ENCODE measurements at regions of chr10 and their contacts with region 1.

Region 1: DNA sequence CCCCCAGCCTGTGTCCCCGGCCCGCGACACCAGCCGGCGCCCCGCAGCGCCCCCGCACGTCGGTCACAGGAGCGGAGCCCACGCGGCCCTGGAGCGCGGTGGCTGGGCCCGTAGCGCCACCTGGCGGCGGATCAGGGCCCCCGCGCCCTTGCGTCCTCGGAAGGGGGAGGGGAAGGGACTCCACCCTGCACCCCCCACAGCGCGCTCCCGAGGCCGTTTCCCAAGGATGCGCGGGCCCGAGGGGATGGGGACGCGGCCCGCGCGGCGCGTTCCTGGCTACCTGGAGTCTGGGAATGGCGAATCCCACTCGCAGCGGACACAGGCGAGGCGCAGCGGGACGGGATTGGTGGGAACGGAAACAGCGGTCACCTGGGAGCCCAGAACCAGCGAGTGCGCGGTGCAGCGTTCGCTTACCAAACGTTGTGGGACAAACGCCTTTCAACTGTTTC is 23.8 kb upstream of the MKI67 start:
- DNase-seq: peak; percentile 71 to 89 (median 83)
- ATAC-seq: peak; percentile 99
- H3K4me3 ChIP-seq: peak overlapping the region; percentile 79
- H3K4me3 Mint-ChIP-seq: peak overlapping the region; percentile 32 to 77 (median 60)
- H3K27ac ChIP-seq: no peak overlapping the region
- H3K27ac Mint-ChIP-seq: peak overlapping the region in 1 of 9 donors; percentile 14
- H3K4me1 ChIP-seq: no peaks in the 10 kb centered on the region
- H3K4me1 Mint-ChIP-seq: peaks cover 0 to 16% (median 3%) of the 10 kb centered on the region in 7 donors
- H3K27me3 ChIP-seq: no peaks in the 10 kb centered on the region
- H3K27me3 Mint-ChIP-seq: peaks cover 0 to 26% (median 0%) of the 10 kb centered on the region in 5 donors

Region 2: GRCh38 chr10:127081851-127082345 is 1068.2 kb before region 1 on chr10:
- CTCF ChIA-PET with region 1: no interaction called
- POLR2A ChIA-PET with region 1: no interaction called
- intact Hi-C with region 1: no loop called
- DNase-seq: no peak
- ATAC-seq: no peak
- H3K4me3 ChIP-seq: no peak overlapping the region
- H3K4me3 Mint-ChIP-seq: no peak overlapping the region
- H3K27ac ChIP-seq: no peak overlapping the region
- H3K27ac Mint-ChIP-seq: no peak overlapping the region
- H3K4me1 ChIP-seq: no peaks in the 10 kb centered on the region
- H3K4me1 Mint-ChIP-seq: no peaks in the 10 kb centered on the region
- H3K27me3 ChIP-seq: no peaks in the 10 kb centered on the region
- H3K27me3 Mint-ChIP-seq: peaks cover 0 to 12% (median 0%) of the 10 kb centered on the region in 5 donors

Region 3: DNA sequence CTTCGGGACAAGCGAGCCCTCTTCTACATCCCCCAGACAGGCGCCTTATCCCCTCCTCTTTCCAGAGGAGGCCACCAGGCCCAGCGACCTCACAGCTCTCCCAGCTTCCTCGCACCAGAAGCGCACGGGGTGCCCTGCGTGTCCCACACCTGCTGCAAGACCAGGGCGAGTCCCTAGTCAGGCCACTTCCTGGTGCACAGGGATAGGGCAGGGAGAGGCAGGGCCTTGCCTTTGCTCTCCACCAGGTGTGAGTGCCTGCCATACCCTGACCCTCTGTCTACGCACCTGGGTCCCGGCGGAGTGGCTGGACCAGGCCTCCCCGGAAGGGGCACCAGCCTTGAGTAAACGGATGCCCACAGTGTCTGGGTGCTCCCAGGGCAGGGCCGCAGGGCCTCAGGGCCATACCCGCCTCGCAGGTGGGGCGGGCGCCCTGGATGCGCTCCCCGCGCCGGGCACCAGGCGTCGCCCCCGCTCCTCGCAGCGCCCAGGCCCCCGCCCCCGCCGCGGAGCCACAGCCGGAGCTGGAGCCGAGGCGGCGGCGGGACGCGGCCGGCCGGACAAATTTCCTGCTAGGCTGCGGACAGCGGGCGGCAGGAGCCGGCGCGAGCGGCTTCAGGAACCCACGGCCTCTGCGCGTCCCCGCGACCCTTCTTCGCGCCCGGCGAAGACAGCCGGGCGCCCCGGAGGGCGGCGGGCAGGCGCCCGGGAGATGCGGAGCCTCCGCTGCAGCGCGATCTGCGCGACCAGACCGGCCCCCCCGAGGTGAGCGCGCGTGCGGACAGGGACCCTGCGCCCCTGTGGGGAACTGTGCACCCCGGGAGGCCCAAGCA is 243.3 kb before region 1 on chr10 and contains the start of gene PTPRE:
- CTCF ChIA-PET with region 1: interaction called, 3 read pairs
- POLR2A ChIA-PET with region 1: no interaction called
- intact Hi-C with region 1: loop called (anchors 1 to 2 kb)
- DNase-seq: peak; percentile 18 to 82 (median 65)
- ATAC-seq: peak; percentile 95
- H3K4me3 ChIP-seq: peak within 1 kb of the TSS; percentile 39
- H3K4me3 Mint-ChIP-seq: peak within 1 kb of the TSS; percentile 8 to 61 (median 38)
- H3K27ac ChIP-seq: no peak within 1 kb of the TSS
- H3K27ac Mint-ChIP-seq: no peak within 1 kb of the TSS
- H3K4me1 ChIP-seq: no peaks in the 10 kb centered on the region
- H3K4me1 Mint-ChIP-seq: peaks cover 0 to 8% (median 0%) of the 10 kb centered on the region in 7 donors
- H3K27me3 ChIP-seq: no peaks in the 10 kb centered on the region
- H3K27me3 Mint-ChIP-seq: peaks cover 20 to 44% (median 24%) of the 10 kb centered on the region in 5 donors
- total RNA-seq, gene PTPRE: 25.4 to 237 (median 29.1) TPM

Region 4: GRCh38 chr10:128035557-128035973 is 114.5 kb before region 1 on chr10:
- CTCF ChIA-PET with region 1: interaction called, 4 read pairs
- POLR2A ChIA-PET with region 1: no interaction called
- intact Hi-C with region 1: loop called (anchors 1 kb)
- DNase-seq: peak in 8 of 9 donors; percentile 33 to 69 (median 50)
- ATAC-seq: peak; percentile 94
- H3K4me3 ChIP-seq: no peak overlapping the region
- H3K4me3 Mint-ChIP-seq: no peak overlapping the region
- H3K27ac ChIP-seq: no peak overlapping the region
- H3K27ac Mint-ChIP-seq: no peak overlapping the region
- H3K4me1 ChIP-seq: no peaks in the 10 kb centered on the region
- H3K4me1 Mint-ChIP-seq: peaks cover 0 to 10% (median 0%) of the 10 kb centered on the region in 7 donors
- H3K27me3 ChIP-seq: no peaks in the 10 kb centered on the region
- H3K27me3 Mint-ChIP-seq: peaks cover 0 to 9% (median 0%) of the 10 kb centered on the region in 5 donors

Region 5: DNA sequence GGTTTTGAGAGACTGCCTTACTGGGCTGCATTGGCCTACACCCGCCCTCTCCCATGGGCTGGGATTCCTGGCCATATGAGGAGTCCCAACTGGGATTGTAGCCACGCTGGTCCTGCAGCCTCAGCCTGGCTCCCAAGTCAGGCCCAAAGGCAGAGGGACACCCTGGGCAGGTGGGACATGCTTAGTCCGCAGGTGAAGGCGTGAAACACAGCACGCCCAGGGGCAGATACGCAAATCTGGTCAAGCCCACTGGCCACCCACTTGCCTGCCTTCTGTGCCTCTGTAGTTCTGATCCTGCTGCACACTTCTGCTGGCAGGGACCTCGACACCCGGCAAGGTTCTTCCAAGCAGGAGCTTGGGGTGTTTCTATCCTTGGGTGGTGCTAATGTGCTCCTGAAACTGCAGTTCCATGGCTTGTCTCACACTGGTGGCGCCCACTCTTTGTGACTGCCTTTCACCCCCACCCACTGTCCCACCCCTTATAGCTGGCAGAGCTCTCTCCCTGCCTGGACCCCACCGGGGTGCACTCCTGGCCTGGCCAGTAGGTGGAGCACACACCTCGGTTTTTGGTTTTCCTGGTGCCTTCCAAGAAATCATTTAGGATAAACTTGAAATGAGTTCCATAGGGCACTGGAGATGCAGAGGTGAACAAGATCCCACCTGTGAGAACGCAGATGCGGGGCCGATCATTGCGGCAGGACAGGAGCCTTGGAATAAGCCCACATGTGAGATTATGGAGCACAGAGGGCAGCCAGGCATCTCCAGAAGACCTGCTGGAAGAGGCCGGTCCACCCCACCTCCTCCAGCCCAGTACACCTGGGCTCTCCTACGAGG is 71.7 kb before region 1 on chr10:
- CTCF ChIA-PET with region 1: interaction called, 7 read pairs
- POLR2A ChIA-PET with region 1: no interaction called
- intact Hi-C with region 1: loop called (anchors 1 kb)
- DNase-seq: peak in 5 of 9 donors; percentile 13 to 48 (median 33)
- ATAC-seq: peak; percentile 70
- H3K4me3 ChIP-seq: no peak overlapping the region
- H3K4me3 Mint-ChIP-seq: no peak overlapping the region
- H3K27ac ChIP-seq: no peak overlapping the region
- H3K27ac Mint-ChIP-seq: no peak overlapping the region
- H3K4me1 ChIP-seq: no peaks in the 10 kb centered on the region
- H3K4me1 Mint-ChIP-seq: peaks cover 0 to 8% (median 0%) of the 10 kb centered on the region in 7 donors
- H3K27me3 ChIP-seq: no peaks in the 10 kb centered on the region
- H3K27me3 Mint-ChIP-seq: no peaks in the 10 kb centered on the region

Region 6: DNA sequence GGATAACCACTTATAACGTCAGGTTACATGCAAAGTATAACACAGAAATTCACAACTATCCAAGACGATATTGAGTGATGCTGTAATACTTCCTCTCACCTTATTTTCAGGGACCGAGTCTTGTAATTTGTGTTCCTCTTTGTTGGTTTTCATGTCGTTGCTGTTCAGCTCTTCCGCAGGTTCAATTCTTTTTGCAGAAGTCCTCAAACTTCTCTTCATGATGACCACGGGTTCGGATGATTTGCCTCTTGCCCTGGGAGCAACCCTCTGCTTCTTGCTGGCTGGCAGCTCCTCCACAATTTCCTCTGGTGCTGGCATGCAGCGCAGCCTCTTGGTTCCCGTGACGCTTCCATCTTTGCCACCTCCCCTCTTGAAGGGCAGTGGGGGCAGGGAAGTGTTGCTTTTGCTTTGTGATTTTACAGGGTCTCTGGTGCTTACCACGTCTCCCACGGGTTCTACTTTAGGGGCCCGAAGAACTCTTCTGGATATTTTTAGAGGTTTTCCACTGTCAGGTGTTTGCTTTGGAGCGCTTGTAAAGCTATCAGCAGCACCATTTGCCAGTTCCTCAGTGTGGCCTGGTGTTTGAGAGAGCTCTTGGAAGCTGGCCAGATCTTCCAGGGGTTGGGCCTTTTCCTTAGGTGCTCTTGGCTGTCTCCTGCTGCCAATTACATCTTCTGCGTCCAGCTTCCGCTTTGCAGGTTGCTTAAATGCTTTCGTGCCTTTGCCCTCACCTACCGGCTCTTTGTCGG is 47.4 kb before region 1 on chr10:
- CTCF ChIA-PET with region 1: no interaction called
- POLR2A ChIA-PET with region 1: no interaction called
- intact Hi-C with region 1: loop called in 1 of 2 experiments (anchors 1 kb)
- DNase-seq: no peak
- ATAC-seq: no peak
- H3K4me3 ChIP-seq: peak overlapping the region; percentile 16
- H3K4me3 Mint-ChIP-seq: peak overlapping the region in 8 of 10 donors; percentile 16 to 68 (median 40)
- H3K27ac ChIP-seq: no peak overlapping the region
- H3K27ac Mint-ChIP-seq: peak overlapping the region in 8 of 9 donors; percentile 13 to 84 (median 69)
- H3K4me1 ChIP-seq: peaks cover 29 to 32% of the 10 kb centered on the region in 2 donors
- H3K4me1 Mint-ChIP-seq: peaks cover 7 to 41% (median 20%) of the 10 kb centered on the region in 7 donors
- H3K27me3 ChIP-seq: no peaks in the 10 kb centered on the region
- H3K27me3 Mint-ChIP-seq: no peaks in the 10 kb centered on the region

Region 7: GRCh38 chr10:128178319-128178958 is 28.4 kb after region 1 on chr10:
- CTCF ChIA-PET with region 1: interaction called, 5 read pairs
- POLR2A ChIA-PET with region 1: no interaction called
- intact Hi-C with region 1: loop called in 1 of 2 experiments (anchors 2 kb)
- DNase-seq: peak in 7 of 9 donors; percentile 16 to 56 (median 34)
- ATAC-seq: peak; percentile 80
- H3K4me3 ChIP-seq: no peak overlapping the region
- H3K4me3 Mint-ChIP-seq: no peak overlapping the region
- H3K27ac ChIP-seq: no peak overlapping the region
- H3K27ac Mint-ChIP-seq: peak overlapping the region in 2 of 9 donors; percentile 72 to 83
- H3K4me1 ChIP-seq: peaks cover 0 to 14% of the 10 kb centered on the region in 2 donors
- H3K4me1 Mint-ChIP-seq: peaks cover 14 to 40% (median 25%) of the 10 kb centered on the region in 7 donors
- H3K27me3 ChIP-seq: no peaks in the 10 kb centered on the region
- H3K27me3 Mint-ChIP-seq: peaks cover 0 to 12% (median 0%) of the 10 kb centered on the region in 5 donors

Region 8: DNA sequence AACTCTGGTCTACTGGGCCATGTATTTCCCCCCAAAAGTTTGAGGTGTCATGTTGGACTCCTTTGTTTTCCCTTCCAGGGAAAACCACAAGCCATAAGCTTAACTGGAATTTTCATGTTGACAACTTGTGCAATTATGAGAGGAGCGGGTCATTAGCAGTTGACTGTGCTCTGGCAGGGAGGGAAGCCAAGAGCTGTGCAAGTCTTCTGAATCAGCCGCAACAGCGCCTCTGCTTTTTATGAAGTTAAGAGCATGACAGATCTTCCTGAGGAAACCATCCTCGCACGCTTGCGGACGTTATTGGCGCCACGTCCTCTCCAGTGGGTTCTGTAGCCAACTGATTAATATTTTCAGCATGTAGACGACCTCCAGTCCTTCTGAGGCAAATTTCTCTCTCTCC is 124.9 kb after region 1 on chr10:
- CTCF ChIA-PET with region 1: no interaction called
- POLR2A ChIA-PET with region 1: no interaction called
- intact Hi-C with region 1: no loop called
- DNase-seq: peak in 1 of 9 donors; percentile 1
- ATAC-seq: no peak
- H3K4me3 ChIP-seq: no peak overlapping the region
- H3K4me3 Mint-ChIP-seq: peak overlapping the region; percentile 3 to 79 (median 44)
- H3K27ac ChIP-seq: no peak overlapping the region
- H3K27ac Mint-ChIP-seq: peak overlapping the region in 1 of 9 donors; percentile 5
- H3K4me1 ChIP-seq: no peaks in the 10 kb centered on the region
- H3K4me1 Mint-ChIP-seq: peaks cover 5 to 9% (median 7%) of the 10 kb centered on the region in 7 donors
- H3K27me3 ChIP-seq: no peaks in the 10 kb centered on the region
- H3K27me3 Mint-ChIP-seq: peaks cover 55 to 79% (median 71%) of the 10 kb centered on the region in 5 donors